ENCODE measurements at regions of chr1 and their contacts with region 1.

Region 1: DNA sequence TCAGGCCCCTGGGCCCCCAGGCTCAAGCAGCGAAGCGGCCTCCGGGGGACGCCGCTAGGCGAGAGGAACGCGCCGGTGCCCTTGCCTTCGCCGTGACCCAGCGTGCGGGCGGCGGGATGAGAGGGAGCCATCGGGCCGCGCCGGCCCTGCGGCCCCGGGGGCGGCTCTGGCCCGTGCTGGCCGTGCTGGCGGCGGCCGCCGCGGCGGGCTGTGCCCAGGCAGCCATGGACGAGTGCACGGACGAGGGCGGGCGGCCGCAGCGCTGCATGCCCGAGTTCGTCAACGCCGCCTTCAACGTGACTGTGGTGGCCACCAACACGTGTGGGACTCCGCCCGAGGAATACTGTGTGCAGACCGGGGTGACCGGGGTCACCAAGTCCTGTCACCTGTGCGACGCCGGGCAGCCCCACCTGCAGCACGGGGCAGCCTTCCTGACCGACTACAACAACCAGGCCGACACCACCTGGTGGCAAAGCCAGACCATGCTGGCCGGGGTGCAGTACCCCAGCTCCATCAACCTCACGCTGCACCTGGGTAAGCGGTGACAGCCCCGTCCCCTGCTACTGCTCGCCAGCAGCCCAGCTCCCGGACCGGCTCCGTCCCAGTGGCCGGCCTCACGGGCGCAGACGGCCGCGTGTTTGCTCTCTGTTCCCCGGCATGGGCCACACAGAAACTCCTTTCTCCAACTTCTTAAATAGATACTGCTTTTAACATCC is 539 bp downstream of the LAMC1 start:
- DNase-seq: peak; percentile 77
- ATAC-seq: peak; percentile 90
- H3K4me3 ChIP-seq: peak overlapping the region; percentile 81 to 95 (median 90)
- H3K27ac ChIP-seq: peak overlapping the region; percentile 86
- H3K4me1 ChIP-seq: peaks cover 59% of the 10 kb centered on the region
- H3K27me3 ChIP-seq: no peaks in the 10 kb centered on the region
- CTCF ChIP-seq: peak; percentile 83
- EP300 ChIP-seq: no peak
- POLR2A ChIP-seq: peak in 1 of 2 experiments; percentile 38; a peak in 1 of 4 replicates
- RAD21 ChIP-seq: peak; percentile 65

Region 2: GRCh38 chr1:183089025-183089639 is 65.4 kb after region 1 on chr1:
- CTCF ChIA-PET with region 1: no interaction called
- POLR2A ChIA-PET with region 1: no interaction called
- in situ Hi-C with region 1: no loop called
- intact Hi-C with region 1: loop called (anchors 2 kb)
- DNase-seq: peak; percentile 98
- ATAC-seq: peak; percentile 95
- H3K4me3 ChIP-seq: no peak overlapping the region; a peak in 1 of 6 replicates
- H3K27ac ChIP-seq: peak overlapping the region; percentile 68
- H3K4me1 ChIP-seq: peaks cover 89% of the 10 kb centered on the region
- H3K27me3 ChIP-seq: no peaks in the 10 kb centered on the region
- CTCF ChIP-seq: no peak
- EP300 ChIP-seq: peak in 1 of 2 experiments; percentile 90; a peak in 2 of 4 replicates
- POLR2A ChIP-seq: no peak
- RAD21 ChIP-seq: no peak

Region 3: DNA sequence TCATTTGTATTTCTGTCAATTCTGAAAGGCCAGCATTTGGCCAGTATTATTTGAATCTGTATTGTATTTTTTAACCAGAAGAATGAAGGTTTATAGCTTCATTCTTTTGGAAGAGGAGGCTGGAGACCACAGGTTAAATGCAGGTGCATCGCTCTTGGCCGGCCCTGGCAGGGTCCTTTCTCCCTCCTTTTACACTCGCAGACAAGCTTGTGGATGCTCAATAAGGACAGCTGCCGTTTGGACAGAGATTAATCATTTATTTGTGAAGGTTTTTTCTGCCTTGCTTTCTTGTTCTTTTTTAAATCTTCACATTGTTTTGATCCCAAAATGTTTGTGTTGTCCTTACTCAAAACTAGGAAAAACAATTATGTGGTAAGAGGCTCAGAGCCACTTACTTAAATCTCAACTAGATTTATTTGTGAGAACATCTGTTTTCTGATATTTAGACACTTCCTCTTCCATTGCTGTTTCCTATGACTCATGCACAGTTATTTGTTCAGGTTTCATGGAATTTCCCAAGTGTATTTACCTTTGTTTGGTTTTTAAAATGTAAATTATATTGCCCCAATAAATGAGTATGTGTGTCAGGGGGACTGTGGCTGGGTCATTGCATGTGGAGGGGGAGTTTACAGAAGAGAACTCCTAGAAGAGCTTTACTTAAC is 115.7 kb after region 1 on chr1:
- CTCF ChIA-PET with region 1: no interaction called
- POLR2A ChIA-PET with region 1: interaction called, 4 read pairs
- in situ Hi-C with region 1: no loop called
- intact Hi-C with region 1: loop called (anchors 5 kb)
- DNase-seq: peak; percentile 74
- ATAC-seq: peak; percentile 81
- H3K4me3 ChIP-seq: no peak overlapping the region
- H3K27ac ChIP-seq: peak overlapping the region; percentile 35
- H3K4me1 ChIP-seq: peaks cover 23% of the 10 kb centered on the region
- H3K27me3 ChIP-seq: no peaks in the 10 kb centered on the region
- CTCF ChIP-seq: no peak
- EP300 ChIP-seq: peak in 1 of 2 experiments; percentile 67; a peak in 2 of 4 replicates
- POLR2A ChIP-seq: no peak
- RAD21 ChIP-seq: no peak

Region 4: DNA sequence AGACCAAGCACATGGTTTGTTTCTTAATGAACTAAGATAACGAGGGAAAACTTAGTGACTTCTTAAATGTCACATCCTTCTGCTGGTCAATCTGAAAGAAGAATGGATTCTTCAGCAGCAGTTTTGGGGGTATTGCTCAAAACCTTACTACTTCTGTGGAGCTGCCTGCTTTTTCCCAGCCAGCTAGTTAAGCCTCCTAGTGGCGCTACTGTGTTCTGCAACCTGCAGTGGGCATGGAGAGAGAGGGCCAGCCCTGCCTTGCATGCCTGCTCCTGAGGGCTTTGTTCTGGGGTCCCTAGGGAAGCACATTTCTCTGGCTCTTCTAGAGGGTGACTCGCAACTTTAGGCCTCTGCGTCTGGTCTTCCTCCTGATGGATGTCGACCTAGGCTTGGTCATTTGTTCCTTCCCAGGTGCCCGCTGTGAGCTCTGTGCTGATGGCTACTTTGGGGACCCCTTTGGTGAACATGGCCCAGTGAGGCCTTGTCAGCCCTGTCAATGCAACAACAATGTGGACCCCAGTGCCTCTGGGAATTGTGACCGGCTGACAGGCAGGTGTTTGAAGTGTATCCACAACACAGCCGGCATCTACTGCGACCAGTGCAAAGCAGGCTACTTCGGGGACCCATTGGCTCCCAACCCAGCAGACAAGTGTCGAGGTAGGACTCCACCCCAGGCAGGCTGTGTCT is 204.3 kb after region 1 on chr1:
- CTCF ChIA-PET with region 1: no interaction called
- POLR2A ChIA-PET with region 1: interaction called, 3 read pairs
- in situ Hi-C with region 1: no loop called
- intact Hi-C with region 1: loop called (anchors 5 kb)
- DNase-seq: peak; percentile 30
- ATAC-seq: peak; percentile 95
- H3K4me3 ChIP-seq: no peak overlapping the region
- H3K27ac ChIP-seq: no peak overlapping the region
- H3K4me1 ChIP-seq: peaks cover 34% of the 10 kb centered on the region
- H3K27me3 ChIP-seq: 0 out of 5 replicates have a peak, but pooled peaks cover 0 to 8% of the 10 kb centered on the region in 2 experiments
- CTCF ChIP-seq: peak; percentile 75
- EP300 ChIP-seq: no peak
- POLR2A ChIP-seq: no peak
- RAD21 ChIP-seq: no peak